ENCODE measurements at regions of chr2 and their contacts with region 1.

Region 1: DNA sequence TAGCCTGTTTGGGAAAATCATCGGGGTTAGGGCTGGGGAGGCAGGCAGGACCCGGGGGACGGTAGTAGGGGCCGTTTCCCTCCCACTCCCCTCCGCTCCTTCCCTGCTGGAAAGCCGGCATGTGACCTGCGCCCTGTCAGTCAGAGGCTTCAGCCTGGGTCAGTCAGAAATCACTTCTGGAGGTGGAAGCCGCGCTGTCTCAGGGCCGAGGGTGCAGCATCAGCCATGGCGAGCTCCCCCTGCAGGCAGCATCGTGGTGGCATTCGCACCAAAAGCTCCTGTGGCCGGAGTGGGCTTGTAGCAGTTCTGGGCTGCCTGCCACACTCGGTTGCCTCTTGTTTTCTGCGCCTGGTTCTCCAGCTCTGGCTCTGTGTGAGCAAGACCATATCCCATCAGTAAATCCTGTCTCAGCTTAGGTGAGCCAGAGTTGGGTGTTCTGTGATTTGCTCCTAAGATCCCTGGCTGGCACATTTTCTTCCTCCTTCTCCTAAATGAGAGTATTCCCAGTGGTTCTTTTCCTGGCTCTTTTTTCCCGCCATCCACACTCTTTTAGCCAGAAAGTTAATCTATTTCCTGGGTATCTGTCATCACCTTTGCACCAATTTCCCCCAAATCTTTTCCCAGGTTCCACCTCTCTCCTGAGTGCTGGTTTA is 123.9 kb upstream of the CD302 start:
- DNase-seq: peak; percentile 90
- H3K4me3 Mint-ChIP-seq: no peak overlapping the region
- H3K27ac Mint-ChIP-seq: no peak overlapping the region
- H3K4me1 Mint-ChIP-seq: peaks cover 35% of the 10 kb centered on the region
- H3K27me3 Mint-ChIP-seq: peaks cover 23% of the 10 kb centered on the region

Region 2: DNA sequence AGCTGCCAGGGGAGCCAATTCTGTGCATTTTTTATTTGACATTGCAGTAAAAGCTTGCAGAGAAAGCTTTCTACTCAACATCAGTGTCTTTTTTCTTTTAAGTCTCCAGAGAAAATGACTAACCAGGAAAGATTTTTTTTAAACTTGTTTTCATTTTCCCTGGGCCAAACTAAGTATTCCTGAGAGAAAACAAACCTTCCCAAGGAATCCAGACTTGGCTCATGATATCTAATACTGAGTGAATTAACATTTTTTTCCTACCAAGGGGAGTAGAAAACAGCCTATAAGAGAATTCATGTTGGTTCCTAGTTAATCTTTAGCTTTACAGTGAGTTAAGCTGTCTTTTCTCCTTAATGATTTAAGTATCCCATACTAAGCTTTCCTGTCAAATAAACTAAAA is 1080.0 kb before region 1 on chr2:
- CTCF ChIA-PET with region 1: no interaction called
- POLR2A ChIA-PET with region 1: no interaction called
- intact Hi-C with region 1: no loop called
- DNase-seq: no peak
- H3K4me3 Mint-ChIP-seq: no peak overlapping the region
- H3K27ac Mint-ChIP-seq: no peak overlapping the region
- H3K4me1 Mint-ChIP-seq: no peaks in the 10 kb centered on the region
- H3K27me3 Mint-ChIP-seq: peaks cover 9% of the 10 kb centered on the region

Region 3: DNA sequence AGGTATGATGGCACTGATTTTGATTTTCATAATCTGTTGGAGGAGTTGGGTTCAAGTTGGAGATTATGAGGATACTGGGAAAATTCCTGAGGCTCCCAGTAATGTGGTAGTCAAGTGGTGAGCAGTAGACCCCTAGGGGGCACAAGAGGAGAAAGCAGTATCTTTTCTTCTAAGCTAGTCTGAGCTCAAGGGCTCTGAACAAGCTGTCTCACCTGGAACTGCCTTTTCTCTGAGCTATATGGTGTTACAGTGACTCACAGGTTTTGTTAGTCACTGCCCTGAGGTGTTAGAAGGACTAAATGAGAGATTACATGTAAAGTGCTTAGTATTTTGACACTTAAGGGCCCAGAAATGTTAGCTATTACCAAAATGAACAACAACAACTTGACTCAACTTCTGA is 166.1 kb before region 1 on chr2:
- CTCF ChIA-PET with region 1: interaction called, 3 read pairs
- POLR2A ChIA-PET with region 1: no interaction called
- intact Hi-C with region 1: loop called (anchors 2 kb)
- DNase-seq: peak; percentile 22
- H3K4me3 Mint-ChIP-seq: no peak overlapping the region
- H3K27ac Mint-ChIP-seq: no peak overlapping the region
- H3K4me1 Mint-ChIP-seq: peaks cover 8% of the 10 kb centered on the region
- H3K27me3 Mint-ChIP-seq: no peaks in the 10 kb centered on the region

Region 4: DNA sequence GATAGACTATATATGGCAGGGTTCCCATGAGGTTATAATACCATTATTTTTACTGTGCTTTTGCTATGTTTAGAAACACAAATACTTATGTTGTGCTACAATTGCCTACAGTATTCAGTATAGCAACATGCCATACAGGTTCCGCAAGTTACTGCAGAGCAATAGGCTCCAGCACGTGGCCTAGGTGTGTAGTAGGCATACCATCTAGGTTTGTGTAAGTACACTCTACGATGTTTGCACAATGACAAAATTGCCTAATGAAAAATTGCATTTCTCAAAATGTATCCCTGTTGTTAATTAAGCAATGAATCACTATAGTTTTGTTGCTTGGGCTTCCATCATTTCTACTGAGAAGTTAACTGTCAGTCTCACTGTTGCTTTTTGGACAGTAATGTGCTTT is 133.6 kb before region 1 on chr2:
- CTCF ChIA-PET with region 1: no interaction called
- POLR2A ChIA-PET with region 1: no interaction called
- intact Hi-C with region 1: no loop called
- DNase-seq: no peak
- H3K4me3 Mint-ChIP-seq: no peak overlapping the region
- H3K27ac Mint-ChIP-seq: no peak overlapping the region
- H3K4me1 Mint-ChIP-seq: peaks cover 4% of the 10 kb centered on the region
- H3K27me3 Mint-ChIP-seq: no peaks in the 10 kb centered on the region

Region 5: DNA sequence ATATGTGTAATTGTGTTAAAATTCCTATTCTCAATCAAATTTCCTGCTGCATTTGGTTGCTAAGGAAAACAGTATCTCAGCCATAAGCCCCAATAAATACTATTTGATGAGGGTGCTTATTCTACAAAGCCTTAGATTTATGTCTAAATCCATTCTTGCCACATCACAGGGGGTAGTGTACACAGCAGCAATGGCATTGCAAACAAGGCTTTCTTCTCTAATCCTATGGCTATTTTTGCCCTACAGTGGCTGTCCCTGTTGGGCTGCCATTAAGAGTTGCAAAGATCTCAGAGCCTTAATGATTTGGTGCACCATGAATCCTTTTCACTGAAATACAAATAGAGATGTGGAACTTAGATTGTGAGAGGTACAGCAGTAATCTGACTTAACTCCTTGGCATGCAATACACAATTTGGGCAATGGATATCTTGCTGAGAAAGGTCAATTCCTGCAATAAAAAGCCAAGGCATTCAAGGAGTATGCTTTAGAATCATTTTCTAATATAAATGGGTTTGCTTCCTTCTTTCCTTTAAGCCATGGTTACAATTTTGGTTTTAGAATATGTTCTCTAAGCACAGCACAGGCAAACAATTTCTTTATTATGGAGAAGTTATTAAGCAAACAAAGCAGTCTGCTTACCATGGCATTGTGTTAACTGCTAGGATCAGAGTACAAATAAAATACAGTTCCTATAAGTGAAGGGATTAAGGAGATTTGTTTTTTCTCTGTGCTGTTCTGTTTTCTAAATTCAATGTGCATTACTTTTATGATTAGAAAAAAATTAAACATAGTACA is 54.1 kb before region 1 on chr2:
- CTCF ChIA-PET with region 1: interaction called, 16 read pairs
- POLR2A ChIA-PET with region 1: no interaction called
- intact Hi-C with region 1: no loop called
- DNase-seq: no peak
- H3K4me3 Mint-ChIP-seq: no peak overlapping the region
- H3K27ac Mint-ChIP-seq: no peak overlapping the region
- H3K4me1 Mint-ChIP-seq: no peaks in the 10 kb centered on the region
- H3K27me3 Mint-ChIP-seq: no peaks in the 10 kb centered on the region

Region 6: GRCh38 chr2:159895258-159896065 is 26.4 kb before region 1 on chr2:
- CTCF ChIA-PET with region 1: interaction called, 15 read pairs
- POLR2A ChIA-PET with region 1: interaction called, 9 read pairs
- intact Hi-C with region 1: loop called (anchors 1 kb)
- DNase-seq: peak; percentile 47
- H3K4me3 Mint-ChIP-seq: peak overlapping the region; percentile 50
- H3K27ac Mint-ChIP-seq: peak overlapping the region; percentile 89
- H3K4me1 Mint-ChIP-seq: peaks cover 94% of the 10 kb centered on the region
- H3K27me3 Mint-ChIP-seq: no peaks in the 10 kb centered on the region